ENCODE measurements at regions of chr2 and their contacts with region 1.

Region 1: DNA sequence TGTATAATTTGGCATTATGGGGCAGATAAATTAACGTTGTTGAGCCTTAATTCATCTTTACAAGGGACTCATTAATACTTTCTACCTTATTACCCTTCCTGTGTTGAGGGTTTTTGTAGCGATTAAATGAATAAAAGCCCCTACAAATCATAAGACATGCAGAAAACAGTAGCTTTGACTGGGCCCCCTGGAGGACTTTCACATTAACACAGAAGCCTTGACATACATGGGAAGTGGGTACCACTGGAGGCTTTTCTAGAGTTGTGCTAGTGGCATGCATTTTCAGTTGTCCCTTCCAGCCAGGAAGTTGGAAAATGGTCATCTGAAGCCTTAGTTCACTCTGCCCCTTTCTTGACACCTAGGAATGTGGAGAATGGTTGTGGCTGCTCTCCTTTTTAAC is 30.2 kb downstream of the MTA3 start:
- DNase-seq: no peak
- ATAC-seq: no peak
- H3K4me3 ChIP-seq: no peak overlapping the region
- H3K4me3 Mint-ChIP-seq: no peak overlapping the region
- H3K27ac ChIP-seq: no peak overlapping the region
- H3K27ac Mint-ChIP-seq: peak overlapping the region; percentile 95
- H3K4me1 ChIP-seq: peaks cover 4 to 15% of the 10 kb centered on the region in 2 donors
- H3K4me1 Mint-ChIP-seq: peaks cover 27% of the 10 kb centered on the region
- H3K27me3 ChIP-seq: no peaks in the 10 kb centered on the region
- H3K27me3 Mint-ChIP-seq: no peaks in the 10 kb centered on the region
- CTCF ChIP-seq: no peak

Region 2: GRCh38 chr2:42256505-42256904 is 342.2 kb before region 1 on chr2:
- CTCF ChIA-PET with region 1: no interaction called
- POLR2A ChIA-PET with region 1: no interaction called
- intact Hi-C with region 1: loop called (anchors 5 kb)
- DNase-seq: peak; percentile 61
- ATAC-seq: peak; percentile 78
- H3K4me3 ChIP-seq: no peak overlapping the region
- H3K4me3 Mint-ChIP-seq: peak overlapping the region; percentile 42
- H3K27ac ChIP-seq: peak overlapping the region; percentile 18 to 62
- H3K27ac Mint-ChIP-seq: peak overlapping the region; percentile 59
- H3K4me1 ChIP-seq: peaks cover 19 to 26% of the 10 kb centered on the region in 2 donors
- H3K4me1 Mint-ChIP-seq: peaks cover 49% of the 10 kb centered on the region
- H3K27me3 ChIP-seq: no peaks in the 10 kb centered on the region
- H3K27me3 Mint-ChIP-seq: no peaks in the 10 kb centered on the region
- CTCF ChIP-seq: no peak

Region 3: GRCh38 chr2:42581257-42581656 is 17.4 kb before region 1 on chr2:
- CTCF ChIA-PET with region 1: no interaction called
- POLR2A ChIA-PET with region 1: no interaction called
- intact Hi-C with region 1: no loop called
- DNase-seq: no peak
- ATAC-seq: no peak
- H3K4me3 ChIP-seq: no peak overlapping the region
- H3K4me3 Mint-ChIP-seq: no peak overlapping the region
- H3K27ac ChIP-seq: no peak overlapping the region
- H3K27ac Mint-ChIP-seq: no peak overlapping the region
- H3K4me1 ChIP-seq: no peaks in the 10 kb centered on the region
- H3K4me1 Mint-ChIP-seq: no peaks in the 10 kb centered on the region
- H3K27me3 ChIP-seq: no peaks in the 10 kb centered on the region
- H3K27me3 Mint-ChIP-seq: no peaks in the 10 kb centered on the region
- CTCF ChIP-seq: no peak

Measured in B cell (primary cell).